Astrocyte of the cerebellum (primary cell): ENCODE measurements at regions of chr10 and their contacts with region 1.

Region 1: DNA sequence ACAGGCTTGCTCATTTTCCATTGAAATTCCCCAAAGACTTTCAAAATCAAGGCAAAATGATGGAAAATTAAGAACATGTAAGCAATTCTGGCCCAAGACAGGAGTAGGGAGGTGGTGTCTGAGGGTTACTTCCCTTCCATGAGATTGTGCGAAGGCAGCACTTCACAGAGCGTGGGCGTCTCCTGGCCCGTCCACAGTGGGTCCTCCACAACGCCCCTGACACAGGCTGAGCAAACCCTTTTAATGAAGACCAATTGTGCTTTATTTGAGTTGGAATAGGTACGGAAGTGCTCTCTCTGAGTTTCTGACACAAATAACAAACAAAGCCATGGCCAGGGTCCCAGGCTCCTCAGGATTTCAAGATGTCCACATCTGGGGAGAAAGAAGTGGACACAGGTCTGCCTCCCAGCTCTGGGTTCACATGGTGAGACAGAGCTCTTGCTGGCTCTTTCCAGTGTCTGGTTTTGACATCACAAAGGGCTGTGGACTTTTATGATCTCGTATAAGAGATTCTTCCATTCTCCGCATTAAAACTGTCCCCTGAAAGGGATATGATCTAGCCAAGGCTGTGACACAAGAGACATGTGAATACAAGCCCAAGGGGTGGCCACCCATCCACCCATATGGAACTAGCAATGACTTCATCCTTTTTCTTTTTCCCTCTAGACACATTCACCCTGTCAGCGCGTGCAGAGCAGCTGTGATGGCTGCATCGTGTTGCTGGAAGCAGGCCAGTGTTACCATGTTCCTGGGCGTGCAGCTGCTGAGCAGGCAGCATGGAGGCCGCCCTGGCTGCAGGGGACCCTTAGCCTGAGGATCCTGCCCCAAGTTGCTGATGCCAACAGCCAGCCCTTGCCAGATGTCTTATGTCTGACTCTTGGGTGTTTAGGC is 145.6 kb downstream of the ADAM12 start:
- DNase-seq: no peak
- H3K4me3 ChIP-seq: no peak overlapping the region
- CTCF ChIP-seq: no peak

Region 2: DNA sequence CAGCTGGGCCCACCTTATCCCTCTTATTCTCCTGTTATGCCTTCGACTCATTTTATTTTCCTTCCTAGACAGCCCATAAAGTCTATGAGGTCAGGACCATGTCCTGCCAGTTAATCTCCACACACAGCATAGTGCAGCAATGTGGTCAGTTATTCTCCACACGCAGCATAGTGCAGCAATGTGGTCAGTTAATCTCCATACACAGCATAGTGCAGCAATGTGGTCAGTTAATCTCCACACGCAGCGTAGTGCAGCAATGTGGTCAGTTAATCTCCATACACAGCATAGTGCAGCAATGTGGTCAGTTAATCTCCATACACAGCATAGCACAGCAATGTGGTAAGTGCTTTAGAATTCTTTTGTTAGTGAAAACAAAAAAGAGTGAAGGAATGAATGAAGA is 637.5 kb before region 1 on chr10:
- in situ Hi-C with region 1: no loop called
- DNase-seq: no peak
- H3K4me3 ChIP-seq: no peak overlapping the region
- CTCF ChIP-seq: no peak

Region 3: GRCh38 chr10:126208726-126209302 is 33.8 kb before region 1 on chr10:
- in situ Hi-C with region 1: loop called (anchors 5 kb)
- DNase-seq: no peak
- H3K4me3 ChIP-seq: no peak overlapping the region
- CTCF ChIP-seq: no peak